PC-3 (cell line): ENCODE measurements at regions of chr17 and their contacts with region 1.

Region 1: GRCh38 chr17:74417178-74418045 is 14.5 kb upstream of the GPRC5C start:
- DNase-seq: peak; percentile 98
- ATAC-seq: peak; percentile 96
- H3K4me3 ChIP-seq: peak overlapping the region; percentile 24; the same call in 1 of the 2 replicates
- H3K27ac ChIP-seq: peak overlapping the region; percentile 88
- H3K4me1 ChIP-seq: peaks cover 21% of the 10 kb centered on the region
- H3K27me3 ChIP-seq: no peaks in the 10 kb centered on the region
- CTCF ChIP-seq: no peak

Region 2: DNA sequence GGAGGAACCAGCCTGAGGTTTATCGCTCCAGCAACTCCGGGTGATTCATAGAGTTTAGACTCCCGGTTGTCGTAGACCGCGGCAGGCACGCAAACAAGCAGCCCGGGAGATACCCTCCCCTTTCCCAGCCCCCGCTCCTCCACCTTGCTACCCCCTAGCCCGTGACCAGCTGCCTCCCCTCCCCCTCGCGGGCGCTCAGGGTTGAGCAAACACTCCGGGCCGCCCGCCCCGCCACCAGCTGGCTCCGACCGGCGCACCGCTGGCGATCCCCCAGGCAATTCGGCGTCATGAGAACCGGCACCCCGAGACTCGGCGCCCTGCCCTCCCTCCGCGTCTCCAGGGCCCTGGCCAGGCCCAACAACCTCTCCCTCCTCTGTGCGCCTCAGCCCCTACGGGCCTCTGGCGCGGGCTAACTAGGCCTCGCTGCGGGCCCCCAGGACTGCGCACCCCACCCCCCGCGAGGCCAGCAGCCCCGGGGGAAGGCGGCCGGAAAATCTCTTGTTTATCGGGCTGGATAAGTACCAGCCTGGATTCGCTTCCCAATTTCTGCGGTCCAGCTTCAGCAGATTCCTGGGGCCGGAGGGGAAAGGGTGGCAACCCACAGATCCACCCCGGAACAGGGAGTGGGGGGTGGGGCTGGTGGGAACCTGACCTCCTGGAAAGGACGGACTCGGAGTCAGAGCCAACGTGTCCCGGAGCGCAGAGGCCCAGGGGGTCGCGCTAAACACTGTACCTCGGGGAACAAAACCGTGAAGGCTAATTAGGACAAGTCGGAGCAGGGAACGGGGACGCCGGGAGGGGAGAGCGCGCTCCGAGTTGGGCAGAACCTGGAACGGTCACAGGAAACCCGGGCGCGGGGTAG is 13.5 kb after region 1 on chr17:
- CTCF ChIA-PET with region 1: interaction called, 3 read pairs
- POLR2A ChIA-PET with region 1: interaction called, 12 read pairs
- intact Hi-C with region 1: loop called (anchors 1 kb)
- DNase-seq: peak; percentile 97
- ATAC-seq: peak; percentile 57
- H3K4me3 ChIP-seq: peak overlapping the region; percentile 80
- H3K27ac ChIP-seq: peak overlapping the region; percentile 99
- H3K4me1 ChIP-seq: peaks cover 54% of the 10 kb centered on the region
- H3K27me3 ChIP-seq: no peaks in the 10 kb centered on the region
- CTCF ChIP-seq: no peak